MCF 10A (cell line): ENCODE measurements at regions of chr9 and their contacts with region 1.

Region 1: DNA sequence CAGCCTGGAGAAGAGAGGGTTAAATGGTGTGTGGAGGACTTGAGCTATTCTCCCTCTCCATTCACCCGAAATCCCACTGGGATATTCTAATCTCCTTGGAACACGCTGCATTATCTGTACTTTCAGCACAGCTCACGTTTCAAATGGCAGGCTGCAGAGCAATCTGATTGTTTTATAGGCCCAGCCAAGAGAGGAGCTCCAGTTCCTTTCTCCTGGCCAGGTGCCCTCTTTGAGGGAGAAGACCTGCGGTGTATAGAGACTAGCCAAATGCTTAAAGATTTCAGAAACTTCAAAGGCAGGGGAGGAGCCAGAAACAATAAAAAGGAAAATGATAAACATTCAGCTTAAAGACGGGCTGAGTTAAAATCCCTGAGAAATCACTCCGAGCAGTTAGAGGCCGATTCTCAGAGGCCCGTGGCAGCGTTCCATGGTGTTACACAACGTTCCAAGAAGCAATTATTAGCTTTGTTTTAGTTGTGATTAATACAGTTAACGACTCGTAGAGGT is 564.0 kb upstream of the KLF4 start:
- DNase-seq: peak; percentile 94
- H3K4me3 Mint-ChIP-seq: peak overlapping the region; percentile 61
- H3K27ac Mint-ChIP-seq: peak overlapping the region; percentile 99
- H3K4me1 Mint-ChIP-seq: peaks cover 72% of the 10 kb centered on the region
- H3K27me3 Mint-ChIP-seq: no peaks in the 10 kb centered on the region
- CTCF ChIP-seq: no peak

Region 2: GRCh38 chr9:107489687-107490605 is 563.7 kb before region 1 on chr9 and contains the start of gene KLF4:
- CTCF ChIA-PET with region 1: interaction called, 3 read pairs
- POLR2A ChIA-PET with region 1: interaction called, 28 read pairs
- intact Hi-C with region 1: loop called (anchors 1 kb)
- DNase-seq: peak; percentile 95
- H3K4me3 Mint-ChIP-seq: peak within 1 kb of the TSS; percentile 94
- H3K27ac Mint-ChIP-seq: peak within 1 kb of the TSS; percentile 96
- H3K4me1 Mint-ChIP-seq: peaks cover 18% of the 10 kb centered on the region
- H3K27me3 Mint-ChIP-seq: no peaks in the 10 kb centered on the region
- CTCF ChIP-seq: no peak
- total RNA-seq, gene KLF4: 94.9 and 96.0 TPM in 2 replicates

Region 3: GRCh38 chr9:107732781-107733522 is 320.7 kb before region 1 on chr9:
- CTCF ChIA-PET with region 1: interaction called, 6 read pairs
- POLR2A ChIA-PET with region 1: interaction called, 30 read pairs
- intact Hi-C with region 1: loop called (anchors 2 kb)
- DNase-seq: peak; percentile 90
- H3K4me3 Mint-ChIP-seq: peak overlapping the region; percentile 65
- H3K27ac Mint-ChIP-seq: peak overlapping the region; percentile 88
- H3K4me1 Mint-ChIP-seq: peaks cover 58% of the 10 kb centered on the region
- H3K27me3 Mint-ChIP-seq: no peaks in the 10 kb centered on the region
- CTCF ChIP-seq: no peak

Region 4: DNA sequence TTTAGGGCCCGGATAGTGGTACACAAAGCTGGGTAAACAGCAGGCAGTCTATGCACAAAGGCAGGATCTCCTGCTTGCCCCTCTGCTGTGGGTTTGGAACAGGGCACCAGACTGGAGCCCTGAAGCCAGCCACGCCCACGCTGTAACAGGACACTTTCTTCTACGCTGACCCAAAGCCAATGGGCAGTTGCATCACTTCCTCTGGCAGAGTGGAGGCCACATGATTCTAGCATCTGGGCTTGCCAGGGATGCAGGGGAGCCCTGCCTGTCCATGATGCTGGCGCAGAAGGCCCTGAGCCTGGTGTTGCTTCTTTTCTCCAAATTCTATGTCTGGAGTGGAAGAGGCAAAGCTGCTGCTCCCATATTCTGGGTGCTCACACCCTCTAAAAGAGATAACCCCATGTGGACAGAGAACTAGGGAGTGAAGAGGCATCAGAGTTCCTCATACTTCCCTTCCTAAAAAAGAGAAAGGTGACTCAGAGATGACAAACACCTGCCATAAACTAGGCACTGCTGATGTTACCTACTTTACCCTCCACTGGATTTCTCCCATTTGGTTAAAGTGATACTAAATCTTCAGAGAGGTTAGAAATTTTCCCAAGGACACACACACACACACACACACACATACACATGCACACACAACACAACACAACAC is 303.7 kb before region 1 on chr9:
- CTCF ChIA-PET with region 1: interaction called, 3 read pairs
- POLR2A ChIA-PET with region 1: interaction called, 13 read pairs
- intact Hi-C with region 1: loop called (anchors 1 kb)
- DNase-seq: peak; percentile 98
- H3K4me3 Mint-ChIP-seq: no peak overlapping the region
- H3K27ac Mint-ChIP-seq: peak overlapping the region; percentile 43
- H3K4me1 Mint-ChIP-seq: peaks cover 38% of the 10 kb centered on the region
- H3K27me3 Mint-ChIP-seq: no peaks in the 10 kb centered on the region
- CTCF ChIP-seq: no peak

Region 5: GRCh38 chr9:107809871-107810460 is 243.6 kb before region 1 on chr9:
- CTCF ChIA-PET with region 1: no interaction called
- POLR2A ChIA-PET with region 1: no interaction called
- intact Hi-C with region 1: no loop called
- DNase-seq: peak; percentile 39
- H3K4me3 Mint-ChIP-seq: no peak overlapping the region
- H3K27ac Mint-ChIP-seq: peak overlapping the region; percentile 21
- H3K4me1 Mint-ChIP-seq: peaks cover 24% of the 10 kb centered on the region
- H3K27me3 Mint-ChIP-seq: no peaks in the 10 kb centered on the region
- CTCF ChIP-seq: no peak

Region 6: DNA sequence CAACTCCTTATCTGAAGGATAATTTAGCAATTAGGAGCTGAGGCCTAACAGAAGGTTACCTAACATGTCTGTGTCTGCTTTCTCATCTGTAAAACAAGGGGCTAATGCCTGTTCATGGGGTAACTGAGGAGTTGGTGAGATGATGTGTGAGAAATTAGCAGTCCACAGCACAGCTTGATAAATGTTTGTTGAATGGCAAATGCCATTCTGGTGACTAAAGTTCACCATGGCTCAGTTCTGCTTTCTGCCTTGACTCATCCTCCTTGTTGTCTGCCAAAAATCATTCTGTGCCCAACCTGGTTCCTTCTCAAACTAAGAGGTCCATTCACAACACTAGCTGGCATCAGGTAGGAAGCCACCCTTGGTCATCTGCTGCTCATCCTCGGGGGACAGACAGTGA is 12.1 kb before region 1 on chr9:
- CTCF ChIA-PET with region 1: interaction called, 11 read pairs
- POLR2A ChIA-PET with region 1: interaction called, 84 read pairs
- intact Hi-C with region 1: no loop called
- DNase-seq: peak; percentile 89
- H3K4me3 Mint-ChIP-seq: peak overlapping the region; percentile 54
- H3K27ac Mint-ChIP-seq: peak overlapping the region; percentile 89
- H3K4me1 Mint-ChIP-seq: peaks cover 50% of the 10 kb centered on the region
- H3K27me3 Mint-ChIP-seq: no peaks in the 10 kb centered on the region
- CTCF ChIP-seq: no peak

Region 7: DNA sequence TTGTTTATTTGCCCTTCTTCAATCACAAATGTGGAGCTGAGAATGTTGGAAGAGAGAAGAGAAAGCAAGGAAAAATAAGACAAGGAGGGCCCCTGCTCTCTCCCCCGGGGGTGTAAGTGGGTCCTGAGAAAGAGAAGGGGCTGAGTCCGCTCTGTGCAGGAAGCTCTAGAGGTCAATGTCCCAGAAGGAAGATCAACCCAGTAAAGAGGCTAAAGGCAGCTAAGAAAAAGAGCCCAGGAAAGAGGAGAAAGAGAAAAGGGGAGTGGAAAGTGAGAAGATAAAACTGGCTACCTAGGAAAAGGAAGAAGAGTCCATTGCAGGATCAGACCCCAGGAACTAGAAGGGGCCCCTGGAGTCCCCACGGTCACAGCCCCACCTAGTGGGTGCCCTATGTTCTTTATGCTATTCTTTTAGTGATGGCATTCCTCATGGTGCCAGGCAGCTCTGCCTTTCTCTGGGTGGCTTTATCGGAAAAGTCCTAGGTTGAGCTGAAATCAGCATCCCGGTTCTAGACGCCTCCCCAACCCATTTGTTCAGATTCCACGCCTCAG is 218.8 kb after region 1 on chr9:
- CTCF ChIA-PET with region 1: no interaction called
- POLR2A ChIA-PET with region 1: interaction called, 3 read pairs
- intact Hi-C with region 1: loop called (anchors 1 kb)
- DNase-seq: peak; percentile 73
- H3K4me3 Mint-ChIP-seq: peak overlapping the region; percentile 52
- H3K27ac Mint-ChIP-seq: peak overlapping the region; percentile 93
- H3K4me1 Mint-ChIP-seq: peaks cover 30% of the 10 kb centered on the region
- H3K27me3 Mint-ChIP-seq: no peaks in the 10 kb centered on the region
- CTCF ChIP-seq: peak; percentile 79

Region 8: DNA sequence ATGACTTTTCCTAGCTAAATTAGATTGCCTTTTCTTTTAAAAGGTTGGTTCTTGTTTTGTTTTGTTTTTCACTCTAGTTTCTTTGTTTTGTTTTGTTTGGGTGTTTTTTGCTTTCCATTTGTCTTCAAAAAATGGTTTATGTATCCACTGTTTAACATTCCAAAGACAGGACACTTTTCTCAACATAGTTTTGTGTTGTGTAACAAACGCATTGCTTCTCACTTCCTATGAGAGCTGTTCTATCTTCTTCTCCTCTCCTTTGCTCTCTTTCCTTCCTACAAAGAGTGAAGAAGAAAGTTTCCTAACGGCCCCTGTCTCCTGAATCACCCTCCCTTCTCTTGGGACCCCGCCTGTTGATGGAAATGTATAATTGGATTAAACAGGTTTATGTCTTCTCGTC is 262.5 kb after region 1 on chr9:
- CTCF ChIA-PET with region 1: no interaction called
- POLR2A ChIA-PET with region 1: no interaction called
- intact Hi-C with region 1: no loop called
- DNase-seq: no peak
- H3K4me3 Mint-ChIP-seq: no peak overlapping the region
- H3K27ac Mint-ChIP-seq: no peak overlapping the region
- H3K4me1 Mint-ChIP-seq: no peaks in the 10 kb centered on the region
- H3K27me3 Mint-ChIP-seq: no peaks in the 10 kb centered on the region
- CTCF ChIP-seq: no peak

Region 9: DNA sequence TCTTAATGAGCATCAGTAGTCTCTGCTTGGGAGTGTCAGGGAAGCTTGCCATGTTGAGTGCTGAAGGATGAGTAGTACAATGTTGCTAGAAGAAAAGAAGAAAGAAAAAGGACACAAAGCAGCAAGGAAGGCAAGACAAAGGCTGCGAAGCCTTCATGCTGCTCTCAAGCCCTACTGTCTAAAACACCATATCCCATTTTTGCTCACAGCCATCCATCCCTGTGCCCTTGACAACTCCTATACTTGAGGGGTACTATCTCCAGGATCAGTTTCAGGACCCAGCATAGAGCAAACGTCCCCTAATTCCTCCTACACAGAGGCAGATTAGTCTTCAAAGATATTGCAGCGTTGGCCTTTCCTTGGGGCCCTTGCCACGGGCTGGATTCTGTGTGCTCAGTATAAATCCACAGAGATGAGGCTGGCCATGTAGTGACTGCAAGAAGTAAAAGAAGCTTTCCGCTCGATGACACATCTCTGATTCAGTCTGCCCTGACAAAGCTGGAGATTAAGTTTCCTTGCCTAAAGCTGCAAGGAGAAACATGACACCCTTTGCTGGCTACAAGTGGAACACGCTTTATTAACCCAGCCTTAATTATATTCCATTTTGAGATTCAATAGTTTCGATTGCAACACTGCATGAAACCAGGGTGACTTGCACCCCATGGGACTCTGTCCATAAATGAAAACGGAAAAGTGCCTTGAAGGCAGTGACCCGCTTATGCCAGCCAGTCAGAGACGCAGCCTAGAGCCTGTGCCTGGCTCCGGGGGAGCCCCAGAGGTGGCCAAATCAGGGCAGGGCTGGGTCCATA is 497.6 kb after region 1 on chr9:
- CTCF ChIA-PET with region 1: no interaction called
- POLR2A ChIA-PET with region 1: interaction called, 11 read pairs
- intact Hi-C with region 1: loop called (anchors 5 kb)
- DNase-seq: peak; percentile 97
- H3K4me3 Mint-ChIP-seq: peak overlapping the region; percentile 53
- H3K27ac Mint-ChIP-seq: peak overlapping the region; percentile 91
- H3K4me1 Mint-ChIP-seq: peaks cover 37% of the 10 kb centered on the region
- H3K27me3 Mint-ChIP-seq: no peaks in the 10 kb centered on the region
- CTCF ChIP-seq: no peak